ENCODE measurements at regions of chr12 and their contacts with region 1.

Region 1: GRCh38 chr12:101759396-101760047 is 20.3 kb upstream of the SYCP3 start:
- DNase-seq: no peak
- ATAC-seq: peak; percentile 68; the same call in 1 of the 2 replicates
- H3K4me3 Mint-ChIP-seq: no peak overlapping the region
- H3K27ac Mint-ChIP-seq: no peak overlapping the region
- H3K4me1 Mint-ChIP-seq: peaks cover 8% of the 10 kb centered on the region
- H3K27me3 Mint-ChIP-seq: no peaks in the 10 kb centered on the region
- CTCF ChIP-seq: peak; percentile 42

Region 2: DNA sequence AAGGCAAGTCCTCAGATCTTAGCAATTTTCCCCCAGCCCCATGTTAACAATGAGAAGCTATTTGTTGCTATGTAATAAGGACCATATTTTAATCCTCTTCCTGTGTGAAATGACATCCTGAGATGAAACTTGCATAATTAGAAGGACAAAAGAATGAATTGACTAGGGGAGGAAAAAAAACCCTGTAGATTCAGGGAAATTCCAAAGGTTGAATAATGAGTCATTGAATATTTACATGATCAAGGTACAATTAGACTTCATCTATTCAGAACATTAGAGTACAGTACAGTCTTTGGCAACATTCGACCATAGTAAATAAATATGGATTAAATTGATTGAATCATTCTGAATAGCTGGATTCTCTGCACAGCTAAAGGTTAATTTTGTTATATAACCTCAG is 155.4 kb before region 1 on chr12:
- CTCF ChIA-PET with region 1: no interaction called
- POLR2A ChIA-PET with region 1: no interaction called
- DNase-seq: no peak
- ATAC-seq: no peak
- H3K4me3 Mint-ChIP-seq: no peak overlapping the region
- H3K27ac Mint-ChIP-seq: peak overlapping the region; percentile 9; the same call in 1 of the 2 replicates
- H3K4me1 Mint-ChIP-seq: peaks cover 31% of the 10 kb centered on the region
- H3K27me3 Mint-ChIP-seq: no peaks in the 10 kb centered on the region
- CTCF ChIP-seq: no peak

Region 3: DNA sequence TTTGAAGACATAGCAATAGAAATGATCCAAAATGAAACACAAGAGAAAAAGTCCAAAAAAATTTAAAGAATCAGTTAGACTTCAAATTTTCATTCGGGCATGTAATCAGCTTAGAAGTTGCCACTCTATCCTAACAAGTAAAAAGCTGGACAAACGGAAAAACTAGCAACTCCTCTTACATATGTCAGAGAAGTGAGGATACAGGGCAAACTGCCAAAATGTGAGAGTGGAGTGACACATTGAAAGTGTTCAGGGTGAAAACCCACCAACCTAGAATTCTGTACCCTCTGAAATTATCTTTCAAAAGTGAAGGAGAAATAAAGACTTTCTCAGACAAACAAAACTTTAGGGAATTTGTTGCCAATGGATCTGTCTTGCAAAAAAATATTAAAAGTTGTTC is 104.1 kb before region 1 on chr12:
- CTCF ChIA-PET with region 1: no interaction called
- POLR2A ChIA-PET with region 1: no interaction called
- DNase-seq: no peak
- ATAC-seq: no peak
- H3K4me3 Mint-ChIP-seq: no peak overlapping the region
- H3K27ac Mint-ChIP-seq: no peak overlapping the region
- H3K4me1 Mint-ChIP-seq: peaks cover 4% of the 10 kb centered on the region
- H3K27me3 Mint-ChIP-seq: no peaks in the 10 kb centered on the region
- CTCF ChIP-seq: no peak

Region 4: DNA sequence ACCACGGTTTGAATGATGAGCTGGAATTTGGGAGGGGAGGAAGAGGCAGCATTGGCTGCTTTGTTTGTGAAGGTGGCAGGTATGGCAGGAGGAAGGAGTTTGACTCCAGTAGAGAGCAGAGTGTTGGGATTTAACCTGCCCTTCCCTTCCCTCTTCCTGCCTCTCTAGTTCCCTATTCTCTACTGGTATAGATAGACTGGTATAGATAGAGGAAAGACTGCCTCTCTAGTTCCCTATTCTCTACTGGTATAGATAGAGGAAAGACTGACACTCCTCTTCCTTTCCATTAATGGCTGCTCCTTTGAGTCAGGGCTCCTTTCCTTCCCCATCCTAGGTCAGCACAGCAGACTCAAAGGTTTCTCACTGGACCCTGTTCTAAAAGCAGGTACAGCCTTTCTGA is 11.8 kb before region 1 on chr12:
- CTCF ChIA-PET with region 1: interaction called, 11 read pairs
- POLR2A ChIA-PET with region 1: no interaction called
- DNase-seq: no peak
- ATAC-seq: no peak
- H3K4me3 Mint-ChIP-seq: no peak overlapping the region
- H3K27ac Mint-ChIP-seq: no peak overlapping the region
- H3K4me1 Mint-ChIP-seq: peaks cover 27% of the 10 kb centered on the region
- H3K27me3 Mint-ChIP-seq: no peaks in the 10 kb centered on the region
- CTCF ChIP-seq: no peak

Region 5: GRCh38 chr12:101792051-101792931 is 32.8 kb after region 1 on chr12:
- CTCF ChIA-PET with region 1: no interaction called
- POLR2A ChIA-PET with region 1: no interaction called
- DNase-seq: no peak
- ATAC-seq: peak; percentile 62; the same call in 1 of the 2 replicates
- H3K4me3 Mint-ChIP-seq: no peak overlapping the region
- H3K27ac Mint-ChIP-seq: peak overlapping the region; percentile 35; the same call in 1 of the 2 replicates
- H3K4me1 Mint-ChIP-seq: no peaks in the 10 kb centered on the region
- H3K27me3 Mint-ChIP-seq: no peaks in the 10 kb centered on the region
- CTCF ChIP-seq: no peak

Region 6: DNA sequence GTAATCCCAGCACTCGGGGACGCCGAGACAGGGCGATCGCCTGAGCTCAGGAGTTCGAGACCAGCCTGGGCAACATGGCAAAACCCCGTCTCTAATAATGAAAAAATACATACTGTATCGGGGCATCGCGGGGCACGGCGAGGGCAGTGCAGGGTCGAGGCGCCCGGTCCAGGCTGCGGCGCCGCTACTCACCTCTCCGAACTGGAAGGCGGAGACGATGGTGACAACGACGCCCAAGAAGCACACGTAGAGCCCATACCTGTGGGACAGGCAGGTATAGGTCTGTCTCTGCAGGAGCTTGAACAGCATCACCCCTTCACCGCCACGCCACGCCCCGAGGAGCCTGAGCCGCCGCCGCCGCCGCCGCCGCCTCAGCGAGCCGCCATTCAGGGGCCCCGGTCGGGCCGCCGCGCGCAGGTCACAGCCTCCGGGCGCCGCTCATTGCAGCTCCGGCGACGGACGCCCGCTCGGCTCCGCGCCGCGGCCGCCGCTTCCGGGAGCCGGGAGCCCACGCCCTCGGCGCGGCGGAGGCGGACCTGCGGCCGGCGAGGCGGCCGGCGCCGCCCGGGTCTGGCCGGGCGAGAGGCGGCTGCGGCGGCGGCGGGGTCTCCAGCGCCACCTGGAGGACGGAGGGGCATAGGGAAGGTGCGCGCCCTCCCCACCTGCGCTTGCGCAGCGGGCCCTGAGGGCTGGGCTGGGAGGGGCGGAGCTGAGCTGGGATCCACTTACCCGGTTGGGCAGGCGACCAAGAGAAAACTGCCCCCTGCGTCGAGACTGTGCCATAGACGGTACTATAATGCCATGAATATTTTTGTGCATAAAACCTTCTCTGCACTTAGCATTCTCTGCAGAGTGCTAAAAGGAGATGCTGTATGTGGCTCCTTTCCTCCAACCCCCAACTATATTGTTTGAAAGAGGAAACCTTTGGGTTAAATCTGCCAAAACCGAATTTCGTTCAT is 71.1 kb after region 1 on chr12 and contains the start of gene GNPTAB:
- CTCF ChIA-PET with region 1: interaction called, 23 read pairs
- POLR2A ChIA-PET with region 1: no interaction called
- DNase-seq: peak; percentile 92
- ATAC-seq: peak; percentile 94
- H3K4me3 Mint-ChIP-seq: peak within 1 kb of the TSS; percentile 96
- H3K27ac Mint-ChIP-seq: peak within 1 kb of the TSS; percentile 60; the same call in 1 of the 2 replicates
- H3K4me1 Mint-ChIP-seq: peaks cover 31% of the 10 kb centered on the region
- H3K27me3 Mint-ChIP-seq: no peaks in the 10 kb centered on the region
- CTCF ChIP-seq: peak; percentile 67
- total RNA-seq, gene GNPTAB: 22.5 to 25.4 TPM (median 24.4 TPM) in 3 replicates

Region 7: DNA sequence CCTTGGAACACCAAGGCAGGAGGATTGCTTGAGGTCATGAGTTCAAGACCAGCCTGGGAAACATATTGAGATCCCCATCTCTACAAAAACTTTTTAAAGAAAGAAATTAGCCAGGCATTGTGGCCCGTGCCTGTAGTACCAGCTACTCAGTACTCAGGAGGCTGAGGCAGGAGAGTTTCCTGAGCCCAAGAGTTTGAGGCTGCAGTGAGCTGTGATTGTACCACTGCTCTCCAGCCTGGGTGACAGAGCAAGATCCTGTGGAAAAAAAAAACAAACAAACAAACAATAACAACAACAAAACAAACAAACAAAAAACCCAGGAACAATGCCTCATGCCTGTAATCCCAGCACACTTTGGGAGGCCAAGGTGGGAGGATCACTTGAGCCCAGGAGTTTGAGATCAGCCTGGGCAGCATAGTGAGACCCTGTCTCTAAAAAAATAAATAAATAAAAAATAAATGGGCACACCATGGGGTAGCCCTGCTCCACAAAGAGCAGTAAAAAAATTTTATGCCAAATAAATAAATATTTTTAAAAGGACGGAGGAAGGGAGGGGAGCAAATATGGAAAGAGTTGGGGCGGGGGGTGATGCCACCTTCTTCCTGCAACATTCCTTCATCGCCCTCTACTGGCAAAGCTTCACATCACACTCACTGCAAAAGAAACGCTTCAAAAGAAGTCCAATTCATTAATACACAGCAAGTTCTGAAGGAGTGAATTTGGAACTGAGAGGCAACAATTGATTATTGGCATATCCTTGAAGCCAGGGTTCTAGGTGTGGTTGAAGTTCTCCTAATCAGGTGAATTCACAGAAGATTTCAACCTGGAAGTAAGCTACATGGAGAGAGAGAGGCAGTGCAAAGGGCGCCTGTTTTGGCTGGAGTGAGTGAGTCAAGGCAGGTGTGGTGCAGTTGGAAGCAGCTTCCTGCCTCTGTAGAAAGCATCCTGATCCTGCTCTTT is 80.1 kb after region 1 on chr12:
- CTCF ChIA-PET with region 1: interaction called, 11 read pairs
- POLR2A ChIA-PET with region 1: no interaction called
- DNase-seq: peak; percentile 74
- ATAC-seq: peak; percentile 80
- H3K4me3 Mint-ChIP-seq: no peak overlapping the region
- H3K27ac Mint-ChIP-seq: no peak overlapping the region
- H3K4me1 Mint-ChIP-seq: no peaks in the 10 kb centered on the region
- H3K27me3 Mint-ChIP-seq: no peaks in the 10 kb centered on the region
- CTCF ChIP-seq: peak; percentile 67

Measured in WTC11 (cell line).